A549 (cell line): ENCODE measurements at regions of chr20 and their contacts with region 1.

Region 1: DNA sequence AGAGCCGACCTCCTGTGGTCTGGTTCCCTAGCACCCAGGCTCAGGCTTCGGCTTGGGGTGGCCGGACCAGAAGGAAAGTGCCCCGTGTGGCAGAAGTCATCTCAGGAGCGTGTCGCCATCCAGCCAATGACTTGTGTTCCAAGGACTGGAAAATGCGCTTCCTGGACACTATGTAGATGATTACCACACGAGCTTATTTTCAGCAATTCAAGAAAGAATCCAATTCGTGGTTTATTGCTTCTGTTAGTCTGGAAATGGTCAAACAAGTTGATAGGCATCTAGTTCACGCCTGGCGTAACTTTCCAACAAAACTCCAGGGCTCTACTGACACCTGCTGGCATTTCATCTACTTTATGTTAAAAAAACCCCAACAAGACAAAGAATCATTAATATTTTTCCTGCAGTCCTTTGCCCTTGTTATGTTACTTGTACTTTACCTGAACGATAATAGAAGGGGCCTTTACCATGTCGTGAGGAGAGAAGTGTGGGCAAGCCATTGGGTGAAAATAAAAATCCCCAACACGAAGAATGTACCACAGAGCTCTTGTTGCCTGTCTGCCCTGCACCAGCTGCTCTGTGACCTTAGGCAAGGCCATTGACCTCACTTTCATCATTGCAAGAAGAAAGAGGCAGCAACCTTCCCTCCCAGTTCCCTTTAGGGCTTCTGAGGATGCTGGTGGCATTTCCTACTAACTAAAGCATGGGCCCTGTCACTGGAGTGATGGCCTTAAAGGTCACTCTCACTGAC is 154.7 kb upstream of the LAMP5 start:
- DNase-seq: peak; percentile 60 to 77
- ATAC-seq: peak; percentile 87 to 93
- H3K4me3 ChIP-seq: no peak overlapping the region
- H3K27ac ChIP-seq: peak overlapping the region; percentile 31 to 53; a peak in 4 of 6 replicates
- H3K4me1 ChIP-seq: peaks cover 8% of the 10 kb centered on the region; the same call in 2 of the 3 replicates
- CTCF ChIP-seq: peak; percentile 99
- EP300 ChIP-seq: no peak
- POLR2A ChIP-seq: no peak
- RAD21 ChIP-seq: peak; percentile 92 to 98

Region 2: GRCh38 chr20:8749986-8750385 is 609.7 kb before region 1 on chr20:
- CTCF ChIA-PET with region 1: interaction called, 11 read pairs
- POLR2A ChIA-PET with region 1: no interaction called
- DNase-seq: no peak
- ATAC-seq: no peak
- H3K4me3 ChIP-seq: no peak overlapping the region
- H3K27ac ChIP-seq: no peak overlapping the region
- H3K4me1 ChIP-seq: no peaks in the 10 kb centered on the region
- CTCF ChIP-seq: no peak
- EP300 ChIP-seq: no peak
- POLR2A ChIP-seq: no peak
- RAD21 ChIP-seq: no peak

Region 3: DNA sequence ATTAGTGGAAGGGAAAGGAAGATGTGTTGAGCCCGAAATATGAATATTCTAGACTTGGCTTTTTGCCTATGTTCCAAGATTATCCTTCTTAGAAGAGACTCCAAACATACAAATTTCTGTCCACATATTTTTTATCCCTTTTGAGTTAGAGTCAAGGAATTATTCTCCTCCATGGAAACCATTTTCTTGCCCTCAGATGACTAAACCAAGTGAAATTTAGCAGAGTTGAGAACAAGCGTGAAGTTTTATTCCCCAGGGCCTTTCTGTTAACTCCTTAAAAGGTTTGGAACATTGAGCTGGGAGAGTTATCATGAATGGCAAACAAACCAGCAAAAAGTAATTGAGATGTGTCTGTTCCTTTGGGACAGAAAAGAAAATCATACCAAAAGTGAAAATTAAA is 576.9 kb before region 1 on chr20:
- CTCF ChIA-PET with region 1: interaction called, 59 read pairs
- POLR2A ChIA-PET with region 1: no interaction called
- DNase-seq: no peak
- ATAC-seq: no peak
- H3K4me3 ChIP-seq: no peak overlapping the region
- H3K27ac ChIP-seq: no peak overlapping the region
- H3K4me1 ChIP-seq: no peaks in the 10 kb centered on the region
- CTCF ChIP-seq: no peak
- EP300 ChIP-seq: no peak
- POLR2A ChIP-seq: no peak
- RAD21 ChIP-seq: no peak

Region 4: DNA sequence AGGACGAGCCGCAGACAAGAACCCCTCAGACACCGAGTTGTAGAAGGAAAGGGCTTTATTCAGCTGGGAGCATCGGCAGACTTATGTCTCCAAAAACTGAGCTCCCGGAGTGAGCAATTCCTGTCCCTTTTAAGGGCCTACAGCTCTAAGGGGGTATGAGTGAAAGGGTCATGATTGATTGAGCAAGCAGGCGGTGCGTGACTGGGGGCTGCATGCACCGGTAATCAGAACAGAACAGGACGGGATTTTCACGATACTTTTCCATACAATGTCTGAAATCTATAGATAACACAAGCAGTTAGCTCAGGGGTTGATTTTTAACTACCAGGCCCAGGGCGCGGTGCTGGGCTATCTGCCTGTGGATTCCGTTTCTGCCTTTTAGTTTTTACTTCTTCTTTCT is 517.2 kb before region 1 on chr20:
- CTCF ChIA-PET with region 1: interaction called, 23 read pairs
- POLR2A ChIA-PET with region 1: no interaction called
- DNase-seq: no peak
- ATAC-seq: no peak
- H3K4me3 ChIP-seq: no peak overlapping the region
- H3K27ac ChIP-seq: no peak overlapping the region
- H3K4me1 ChIP-seq: no peaks in the 10 kb centered on the region
- CTCF ChIP-seq: no peak
- EP300 ChIP-seq: no peak
- POLR2A ChIP-seq: no peak
- RAD21 ChIP-seq: no peak

Region 5: GRCh38 chr20:9068851-9069663 is 290.7 kb before region 1 on chr20 and contains the start of gene PLCB4:
- CTCF ChIA-PET with region 1: interaction called, 42 read pairs
- POLR2A ChIA-PET with region 1: no interaction called
- DNase-seq: peak; percentile 63 to 88
- ATAC-seq: peak; percentile 54 to 65
- H3K4me3 ChIP-seq: peak within 1 kb of the TSS; percentile 85
- H3K27ac ChIP-seq: peak within 1 kb of the TSS; percentile 90 to 97
- H3K4me1 ChIP-seq: peaks cover 61% of the 10 kb centered on the region
- CTCF ChIP-seq: no peak
- EP300 ChIP-seq: 0 out of 5 replicates have a peak, but pooled peaks of 1 of the 2 experiments have one; percentile 37
- POLR2A ChIP-seq: 0 out of 2 replicates have a peak, but pooled peaks have one; percentile 19
- RAD21 ChIP-seq: peak in 1 of 2 experiments; percentile 13; a peak in 3 of 5 replicates
- polyA plus RNA-seq, gene PLCB4: 24.0 and 32.1 TPM in 2 replicates

Region 6: GRCh38 chr20:9332783-9333479 is 26.8 kb before region 1 on chr20:
- CTCF ChIA-PET with region 1: interaction called, 10 read pairs
- POLR2A ChIA-PET with region 1: no interaction called
- DNase-seq: no peak
- ATAC-seq: no peak
- H3K4me3 ChIP-seq: no peak overlapping the region
- H3K27ac ChIP-seq: peak overlapping the region; percentile 37 to 55; a peak in 4 of 6 replicates
- H3K4me1 ChIP-seq: peaks cover 51% of the 10 kb centered on the region
- CTCF ChIP-seq: no peak
- EP300 ChIP-seq: no peak
- POLR2A ChIP-seq: no peak
- RAD21 ChIP-seq: no peak

Region 7: DNA sequence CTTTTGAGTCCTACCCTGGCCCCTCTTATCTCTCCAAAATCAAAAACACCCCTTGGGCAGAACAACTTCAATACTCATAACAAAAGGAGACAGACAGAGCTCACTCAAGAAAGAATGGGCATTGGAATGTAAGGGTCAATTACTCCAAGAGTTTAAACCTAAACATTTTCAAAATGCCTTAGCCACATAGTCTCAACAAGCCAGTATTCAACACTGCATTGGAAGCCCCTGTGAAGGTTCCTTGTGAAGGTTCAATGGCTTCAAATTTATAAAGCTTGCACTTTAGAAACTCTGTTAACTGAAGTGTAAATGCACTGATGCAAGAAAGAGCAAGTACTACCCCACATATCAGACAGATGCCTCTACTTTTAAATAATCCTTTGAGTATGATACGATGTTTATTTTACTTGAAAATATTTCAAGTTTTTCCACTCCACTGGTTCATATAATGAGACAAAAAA is 15.5 kb after region 1 on chr20:
- CTCF ChIA-PET with region 1: interaction called, 25 read pairs
- POLR2A ChIA-PET with region 1: no interaction called
- DNase-seq: no peak
- ATAC-seq: no peak
- H3K4me3 ChIP-seq: no peak overlapping the region
- H3K27ac ChIP-seq: no peak overlapping the region
- H3K4me1 ChIP-seq: peaks cover 10% of the 10 kb centered on the region; the same call in 2 of the 3 replicates
- CTCF ChIP-seq: no peak
- EP300 ChIP-seq: no peak
- POLR2A ChIP-seq: no peak
- RAD21 ChIP-seq: no peak

Region 8: DNA sequence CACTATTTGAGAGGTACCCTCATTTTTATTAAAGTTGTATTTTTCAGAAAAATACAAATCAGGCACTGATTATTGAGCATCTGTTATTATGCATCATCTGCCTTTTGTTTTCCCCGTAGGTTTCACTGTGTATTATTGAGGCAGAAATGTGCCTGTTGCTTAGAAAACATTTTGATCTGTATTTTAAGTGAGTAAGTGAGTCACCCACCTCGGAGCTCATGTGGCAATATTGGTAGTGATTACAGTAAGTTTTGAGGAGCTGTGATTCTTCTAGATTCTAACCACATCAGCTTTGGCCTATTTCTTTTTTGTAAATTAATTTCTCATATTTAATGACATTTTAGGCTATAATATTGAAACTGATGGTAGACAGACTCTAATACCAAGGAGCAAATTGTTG is 95.1 kb after region 1 on chr20:
- CTCF ChIA-PET with region 1: no interaction called
- POLR2A ChIA-PET with region 1: no interaction called
- DNase-seq: no peak
- ATAC-seq: no peak
- H3K4me3 ChIP-seq: no peak overlapping the region
- H3K27ac ChIP-seq: no peak overlapping the region
- H3K4me1 ChIP-seq: peaks cover under 1% of the 10 kb centered on the region; the same call in 2 of the 3 replicates
- CTCF ChIP-seq: no peak
- EP300 ChIP-seq: no peak
- POLR2A ChIP-seq: no peak
- RAD21 ChIP-seq: no peak